ENCODE measurements at regions of chr2 and their contacts with region 1.

Region 1: DNA sequence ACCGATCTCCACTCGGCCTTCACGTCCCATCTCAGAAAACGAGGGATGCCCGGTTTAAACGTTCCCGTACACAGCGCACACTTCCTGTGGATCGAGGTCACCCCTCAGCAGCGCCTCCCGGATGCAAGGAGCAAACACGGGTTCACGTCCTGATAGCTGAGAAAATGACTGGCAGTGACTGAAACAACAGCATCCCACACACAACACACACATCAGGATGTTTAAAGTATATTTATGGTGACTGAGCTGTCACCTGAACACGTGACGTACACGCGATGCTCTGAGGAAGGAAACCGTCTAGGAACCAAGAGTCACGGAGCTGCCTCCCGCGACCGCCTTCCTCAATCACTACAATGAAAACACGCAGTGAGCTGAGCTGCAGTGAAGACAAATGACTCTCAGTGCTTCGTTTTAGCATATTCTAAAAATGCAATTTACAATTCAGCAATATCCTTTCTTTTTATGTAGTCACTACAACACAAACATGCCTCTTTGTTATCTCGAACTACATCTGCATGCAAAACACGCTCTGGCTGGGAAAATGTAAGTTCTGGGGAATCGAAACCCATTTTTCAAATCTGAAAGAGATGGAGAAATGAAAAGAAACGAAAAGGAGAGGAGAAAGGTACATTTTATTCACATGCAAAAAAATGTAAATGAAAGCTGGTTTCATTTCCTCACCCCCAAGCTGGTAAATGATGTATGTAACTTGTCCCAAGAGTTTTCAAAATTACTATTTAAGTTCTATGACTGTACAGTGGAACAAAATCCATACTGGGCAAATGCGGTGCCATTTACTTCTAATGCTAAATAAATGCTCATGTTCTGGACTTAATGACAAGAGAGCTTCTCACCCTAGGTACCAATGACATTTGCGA is 19.8 kb downstream of the HDAC4 start:
- DNase-seq: peak; percentile 64
- H3K4me3 Mint-ChIP-seq: peak overlapping the region; percentile 83
- H3K27ac Mint-ChIP-seq: peak overlapping the region; percentile 94
- H3K4me1 Mint-ChIP-seq: peaks cover 38% of the 10 kb centered on the region
- H3K27me3 Mint-ChIP-seq: peaks cover 2% of the 10 kb centered on the region

Region 2: DNA sequence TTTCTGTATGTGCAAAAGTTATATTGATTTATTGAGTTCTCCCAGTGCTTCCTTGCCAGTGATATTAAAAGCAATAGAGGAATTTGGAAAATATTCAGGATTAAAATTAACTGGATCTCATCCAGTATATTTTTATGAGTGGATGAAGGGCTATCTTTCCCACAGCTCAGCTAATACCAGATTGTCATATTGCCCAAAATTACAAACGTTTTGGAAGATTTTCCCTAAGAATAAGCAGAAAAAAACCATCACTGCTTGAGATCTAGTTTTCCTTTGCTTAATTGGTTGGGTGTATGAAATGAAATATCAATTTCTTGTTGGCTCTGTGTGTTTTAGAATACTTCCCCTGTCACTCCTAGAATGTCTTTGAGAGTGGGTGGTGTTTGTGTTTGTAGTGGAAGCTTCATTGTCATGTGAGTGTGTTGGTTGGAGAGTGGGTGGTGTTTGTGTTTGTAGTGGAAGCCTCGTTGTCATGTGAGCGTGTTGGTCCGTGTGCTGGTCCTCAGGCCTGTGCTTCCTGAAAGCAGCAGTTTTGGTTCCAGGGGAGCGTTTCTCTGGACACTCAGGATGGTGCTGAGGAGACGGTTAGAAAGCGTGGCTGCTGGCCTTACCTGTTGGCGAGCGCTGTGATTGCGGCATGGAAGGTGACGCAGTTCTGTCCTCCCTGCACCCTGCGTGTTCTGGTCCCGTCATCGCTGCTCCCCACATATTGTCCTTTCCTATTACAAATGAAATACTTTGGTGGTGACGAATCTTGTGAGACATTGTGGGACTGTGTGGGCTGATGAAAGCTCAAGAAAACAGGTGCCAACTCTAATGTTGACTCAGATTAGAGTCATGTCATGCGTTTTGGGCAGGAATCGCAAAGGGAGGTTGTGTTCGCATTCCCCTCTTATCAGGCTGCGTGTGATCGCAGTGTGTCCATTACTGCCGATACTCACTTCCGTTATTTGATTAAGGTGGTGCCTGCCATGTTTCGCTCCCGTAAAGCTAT is 941.9 kb before region 1 on chr2:
- intact Hi-C with region 1: loop called (anchors 2 kb)
- DNase-seq: no peak
- H3K4me3 Mint-ChIP-seq: peak overlapping the region; percentile 9
- H3K27ac Mint-ChIP-seq: peak overlapping the region; percentile 71
- H3K4me1 Mint-ChIP-seq: peaks cover 46% of the 10 kb centered on the region
- H3K27me3 Mint-ChIP-seq: no peaks in the 10 kb centered on the region

Region 3: DNA sequence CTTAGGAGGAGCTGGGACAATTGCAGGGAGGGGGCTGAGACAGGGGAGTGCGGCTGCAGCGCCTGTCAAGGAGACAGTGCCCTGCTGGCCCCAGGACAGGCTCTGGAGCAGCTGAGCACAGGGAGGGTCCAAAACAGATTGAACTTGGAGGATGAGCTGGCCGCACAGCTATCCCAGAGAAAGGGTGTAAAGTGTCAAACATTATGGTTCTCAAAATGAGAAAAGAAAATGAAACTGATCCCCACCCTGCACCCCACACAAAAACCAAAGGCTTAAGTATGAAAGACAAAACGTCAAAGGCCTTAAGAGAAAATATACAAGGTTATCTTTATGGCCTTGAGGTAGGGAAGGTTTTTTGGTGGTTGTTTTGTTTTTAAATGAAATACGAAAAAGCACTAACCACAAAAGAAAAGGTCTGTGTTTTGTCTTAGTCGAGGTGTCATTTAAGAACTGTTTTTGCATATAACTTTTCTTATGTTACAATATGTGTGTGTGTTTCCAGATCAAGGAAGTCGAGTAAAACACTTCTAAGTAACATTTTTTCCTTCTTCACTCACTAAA is 92.0 kb before region 1 on chr2:
- intact Hi-C with region 1: loop called (anchors 1 kb)
- DNase-seq: peak; percentile 61
- H3K4me3 Mint-ChIP-seq: peak overlapping the region; percentile 77
- H3K27ac Mint-ChIP-seq: peak overlapping the region; percentile 98
- H3K4me1 Mint-ChIP-seq: peaks cover 78% of the 10 kb centered on the region
- H3K27me3 Mint-ChIP-seq: peaks cover 7% of the 10 kb centered on the region

Region 4: DNA sequence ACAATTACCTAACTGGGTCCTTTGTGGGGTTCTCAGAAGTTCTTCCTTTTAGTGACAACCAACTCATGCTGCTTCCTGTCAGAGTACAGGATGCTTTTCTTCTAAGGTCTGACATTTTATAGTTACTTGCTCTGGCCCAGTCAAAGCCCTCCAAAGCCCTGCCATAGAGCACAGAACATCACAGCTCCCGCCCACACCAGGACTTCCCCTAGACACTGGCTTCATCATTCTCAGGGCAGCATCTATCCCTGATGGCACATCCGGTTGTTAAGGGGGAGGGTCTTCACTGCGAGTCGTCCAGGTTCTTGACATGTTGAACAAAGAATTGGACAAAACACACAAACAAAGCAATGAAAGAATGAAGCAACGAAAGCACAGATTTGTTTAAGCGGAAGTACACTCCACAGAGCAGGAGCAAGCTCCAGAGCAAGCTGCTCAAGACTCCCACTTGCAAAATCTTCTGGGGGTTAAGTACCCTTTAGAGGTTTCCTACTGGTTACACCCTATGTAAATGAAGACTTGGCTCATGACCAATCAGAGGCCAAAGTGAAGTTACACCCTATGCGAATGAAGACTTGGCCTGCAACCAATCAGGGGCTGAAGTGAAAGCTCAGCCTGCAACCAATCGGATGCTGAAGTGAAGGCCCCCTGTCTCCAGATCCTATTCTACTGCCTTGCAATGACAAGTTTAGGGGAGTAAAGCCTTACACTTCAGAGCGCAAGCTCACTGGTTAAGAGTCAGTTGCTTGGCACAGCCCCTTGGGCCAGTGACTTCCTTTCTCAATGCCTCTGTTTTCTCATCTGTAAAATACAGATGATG is 59.3 kb before region 1 on chr2:
- intact Hi-C with region 1: loop called (anchors 1 kb)
- DNase-seq: peak; percentile 73
- H3K4me3 Mint-ChIP-seq: peak overlapping the region; percentile 76
- H3K27ac Mint-ChIP-seq: peak overlapping the region; percentile 97
- H3K4me1 Mint-ChIP-seq: peaks cover 88% of the 10 kb centered on the region
- H3K27me3 Mint-ChIP-seq: no peaks in the 10 kb centered on the region

Region 5: GRCh38 chr2:239369631-239370161 is 11.4 kb before region 1 on chr2:
- intact Hi-C with region 1: loop called (anchors 1 kb)
- DNase-seq: peak; percentile 83
- H3K4me3 Mint-ChIP-seq: no peak overlapping the region
- H3K27ac Mint-ChIP-seq: peak overlapping the region; percentile 92
- H3K4me1 Mint-ChIP-seq: peaks cover 26% of the 10 kb centered on the region
- H3K27me3 Mint-ChIP-seq: no peaks in the 10 kb centered on the region

Region 6: DNA sequence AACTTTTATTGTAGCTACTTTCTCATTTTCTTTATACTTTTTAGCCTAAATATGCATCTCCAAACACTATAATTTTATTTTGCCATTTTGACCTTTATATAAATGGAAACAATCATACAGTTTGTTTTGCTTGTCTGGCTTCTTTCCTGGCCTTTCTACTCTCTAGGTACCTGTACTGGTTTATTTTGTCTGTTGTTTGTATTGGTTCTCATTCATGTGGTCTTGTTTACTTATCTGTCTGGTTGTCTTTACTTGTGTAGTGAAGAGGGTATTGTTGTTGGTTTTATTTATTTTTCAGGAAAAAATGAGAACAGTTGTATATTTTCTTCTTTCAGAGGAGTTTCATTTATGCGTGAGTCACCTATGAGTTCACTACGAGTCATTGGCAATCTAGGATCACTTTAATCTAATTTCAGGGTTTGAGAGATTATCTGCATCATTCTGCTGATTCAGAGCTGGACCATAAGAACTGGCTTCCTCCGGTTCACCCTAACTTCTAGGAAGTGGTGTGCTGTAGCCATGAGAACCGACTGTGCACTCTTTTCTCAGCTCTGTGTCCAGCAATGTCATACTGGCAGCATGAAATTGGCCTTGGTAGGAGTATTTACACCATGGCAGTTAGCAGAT is 52.8 kb after region 1 on chr2:
- intact Hi-C with region 1: loop called (anchors 1 kb)
- DNase-seq: no peak
- H3K4me3 Mint-ChIP-seq: no peak overlapping the region
- H3K27ac Mint-ChIP-seq: no peak overlapping the region
- H3K4me1 Mint-ChIP-seq: peaks cover 6% of the 10 kb centered on the region
- H3K27me3 Mint-ChIP-seq: peaks cover 10% of the 10 kb centered on the region

Measured in activated T-helper 1 cell treated with anti-CD3 and anti-CD28 coated beads, Interleukin-12 subunit alpha, Interleukin-12 subunit beta, Interleukin-2, Interleukin-4 antibody, amounts not matched to agents 30 ng/mL and 10 ng/mL and 1 ng/mL, durations not matched to agents 14 hours and 24 hours and 36 hours (primary cell).